Gastrocnemius medialis (tissue), 4 donors: ENCODE measurements at regions of chr2 and their contacts with region 1.

Region 1: DNA sequence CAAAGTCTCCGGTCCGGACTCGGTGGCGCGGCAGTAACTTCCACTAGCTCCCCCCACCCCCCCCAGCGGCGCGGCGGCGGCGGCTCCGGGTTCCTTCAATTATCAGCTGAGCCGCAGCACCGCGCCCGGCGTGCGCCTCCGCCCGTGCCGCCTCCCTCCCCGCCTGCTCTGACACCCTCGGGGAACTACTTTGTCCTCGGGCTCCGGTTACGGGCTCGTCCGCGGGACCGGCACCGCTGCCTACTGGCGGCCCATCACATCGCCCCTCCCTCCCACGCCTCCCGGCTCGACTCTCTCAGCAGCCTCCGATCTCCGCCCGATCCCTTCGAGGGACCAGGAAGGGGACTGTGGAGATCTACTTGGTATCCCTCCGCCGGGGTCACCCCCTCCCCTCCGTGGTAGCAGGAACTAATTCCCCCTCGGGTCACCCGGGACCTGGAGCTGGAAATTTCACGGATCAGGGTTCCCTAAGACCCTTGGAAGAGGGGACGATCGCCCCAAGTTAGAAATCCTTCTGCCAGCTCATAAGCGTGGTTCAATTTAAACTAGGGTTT is at the start of gene TRIP12:
- DNase-seq: peak; percentile 92
- ATAC-seq: peak; percentile 88 to 92
- H3K4me3 ChIP-seq: peak within 1 kb of the TSS; percentile 73 to 99 (median 92)
- H3K27ac ChIP-seq: peak within 1 kb of the TSS; percentile 97 to 100 (median 100)
- H3K4me1 ChIP-seq: peaks cover 28 to 31% of the 10 kb centered on the region in 2 donors
- H3K27me3 ChIP-seq: no peaks in the 10 kb centered on the region
- CTCF ChIP-seq: no peak
- POLR2A ChIP-seq: peak; percentile 46 to 49
- total RNA-seq, gene TRIP12: 122 to 152 (median 141) TPM

Region 2: GRCh38 chr2:229780856-229781773 is 140.9 kb before region 1 on chr2:
- in situ Hi-C with region 1: no loop called
- intact Hi-C with region 1: loop called (anchors 5 kb)
- DNase-seq: no peak
- ATAC-seq: peak; percentile 57 to 75
- H3K4me3 ChIP-seq: no peak overlapping the region
- H3K27ac ChIP-seq: no peak overlapping the region
- H3K4me1 ChIP-seq: peaks cover 10 to 11% of the 10 kb centered on the region in 2 donors
- H3K27me3 ChIP-seq: no peaks in the 10 kb centered on the region
- CTCF ChIP-seq: peak; percentile 56 to 89 (median 69)
- POLR2A ChIP-seq: no peak

Region 3: GRCh38 chr2:229873123-229873581 is 48.8 kb before region 1 on chr2:
- in situ Hi-C with region 1: no loop called
- intact Hi-C with region 1: no loop called
- DNase-seq: no peak
- ATAC-seq: no peak
- H3K4me3 ChIP-seq: no peak overlapping the region
- H3K27ac ChIP-seq: no peak overlapping the region
- H3K4me1 ChIP-seq: peaks cover 40 to 47% of the 10 kb centered on the region in 2 donors
- H3K27me3 ChIP-seq: no peaks in the 10 kb centered on the region
- CTCF ChIP-seq: no peak
- POLR2A ChIP-seq: no peak

Region 4: DNA sequence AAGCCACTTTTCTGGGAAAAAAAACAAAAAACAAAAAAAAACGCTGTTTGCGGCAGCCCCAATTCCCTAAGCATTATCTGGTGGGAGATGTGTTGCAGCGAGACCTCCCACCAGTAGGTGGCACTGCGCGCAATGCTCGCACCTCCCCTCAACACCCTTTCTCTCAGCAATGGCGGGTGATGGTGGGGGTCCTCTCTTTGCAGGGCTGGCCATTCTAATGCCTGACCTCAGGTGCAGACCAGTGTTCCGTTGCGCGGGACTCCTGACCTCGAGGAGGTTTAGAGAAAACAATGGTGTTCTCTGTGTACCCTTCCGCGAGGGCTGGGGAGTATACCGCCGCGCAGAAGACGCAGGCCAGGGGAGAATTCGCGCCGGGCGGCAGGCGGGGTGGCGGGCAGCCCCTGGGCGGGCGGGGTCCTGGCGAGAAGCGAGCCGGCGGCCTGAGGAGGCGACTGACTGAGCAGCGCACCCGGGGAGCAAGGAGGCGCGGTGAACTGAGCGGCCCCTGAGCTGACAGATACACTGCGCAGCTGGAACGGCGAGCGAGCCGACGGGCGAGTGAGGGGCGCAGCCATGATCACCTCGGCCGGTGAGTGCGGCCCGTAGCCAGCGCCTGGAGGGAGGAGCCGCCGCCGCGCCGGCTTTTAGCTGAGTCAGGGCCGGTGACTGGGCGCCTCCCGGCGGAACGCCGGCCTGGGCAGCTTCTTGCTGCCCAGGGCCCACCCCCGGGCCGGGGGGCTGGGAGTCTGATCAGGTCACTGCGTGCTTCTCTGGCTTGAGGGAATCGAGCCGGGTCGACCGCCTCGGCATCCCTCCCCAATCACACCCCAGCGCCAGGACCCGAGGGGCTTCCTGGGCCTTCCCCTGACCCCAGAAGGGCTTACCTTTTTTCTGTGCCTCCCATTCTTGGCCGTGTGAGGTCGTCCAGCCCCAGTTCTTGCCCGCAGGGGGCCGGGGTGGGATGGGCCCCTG is 1134.8 kb after region 1 on chr2 and contains the start of gene PSMD1:
- in situ Hi-C with region 1: no loop called
- intact Hi-C with region 1: loop called (anchors 5 kb)
- DNase-seq: peak; percentile 86 to 90
- ATAC-seq: peak; percentile 91 to 92
- H3K4me3 ChIP-seq: peak within 1 kb of the TSS; percentile 94 to 98 (median 96)
- H3K27ac ChIP-seq: peak within 1 kb of the TSS; percentile 93 to 96 (median 94)
- H3K4me1 ChIP-seq: peaks cover 41 to 49% of the 10 kb centered on the region in 2 donors
- H3K27me3 ChIP-seq: no peaks in the 10 kb centered on the region
- CTCF ChIP-seq: peak; percentile 88 to 96 (median 95)
- POLR2A ChIP-seq: peak; percentile 68 to 70
- total RNA-seq, gene PSMD1: 169 to 189 (median 182) TPM